Activated CD4-positive, alpha-beta memory T cell treated with anti-CD3 and anti-CD28 coated beads for 36 hours (primary cell): ENCODE measurements at regions of chr14 and their contacts with region 1.

Region 1: GRCh38 chr14:63470962-63471793 is 72.0 kb downstream of the PPP2R5E start:
- DNase-seq: no peak
- H3K4me3 Mint-ChIP-seq: no peak overlapping the region
- H3K27ac Mint-ChIP-seq: no peak overlapping the region
- H3K4me1 Mint-ChIP-seq: peaks cover 49% of the 10 kb centered on the region
- H3K27me3 Mint-ChIP-seq: no peaks in the 10 kb centered on the region

Region 2: GRCh38 chr14:63437953-63438757 is 33.0 kb before region 1 on chr14:
- CTCF ChIA-PET with region 1: interaction called, 4 read pairs
- POLR2A ChIA-PET with region 1: interaction called, 3 read pairs
- intact Hi-C with region 1: loop called (anchors 5 kb)
- DNase-seq: peak; percentile 22
- H3K4me3 Mint-ChIP-seq: no peak overlapping the region
- H3K27ac Mint-ChIP-seq: no peak overlapping the region
- H3K4me1 Mint-ChIP-seq: peaks cover 51% of the 10 kb centered on the region
- H3K27me3 Mint-ChIP-seq: no peaks in the 10 kb centered on the region

Region 3: DNA sequence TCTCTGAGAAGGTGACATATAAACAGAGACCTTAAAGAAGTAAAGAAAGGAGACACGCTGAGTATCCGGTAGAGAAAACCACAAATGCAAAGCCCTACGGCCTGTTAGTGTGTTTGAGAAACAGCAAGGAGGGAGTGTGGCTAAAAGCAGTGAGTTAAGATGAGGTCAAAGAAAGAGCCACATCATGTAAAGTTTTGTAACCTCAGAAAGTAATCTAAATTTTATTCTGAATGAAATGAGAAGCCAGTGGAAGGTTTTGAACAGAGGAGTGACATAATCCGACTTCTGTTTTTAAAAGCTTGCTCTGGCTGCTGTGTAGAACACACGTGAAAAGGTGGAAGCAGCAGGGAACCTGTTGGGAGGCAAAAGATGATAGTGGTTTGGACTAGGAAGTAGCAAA is 39.4 kb after region 1 on chr14:
- CTCF ChIA-PET with region 1: no interaction called
- POLR2A ChIA-PET with region 1: no interaction called
- intact Hi-C with region 1: loop called (anchors 1 kb)
- DNase-seq: peak; percentile 21
- H3K4me3 Mint-ChIP-seq: no peak overlapping the region
- H3K27ac Mint-ChIP-seq: no peak overlapping the region
- H3K4me1 Mint-ChIP-seq: peaks cover 57% of the 10 kb centered on the region
- H3K27me3 Mint-ChIP-seq: no peaks in the 10 kb centered on the region

Region 4: DNA sequence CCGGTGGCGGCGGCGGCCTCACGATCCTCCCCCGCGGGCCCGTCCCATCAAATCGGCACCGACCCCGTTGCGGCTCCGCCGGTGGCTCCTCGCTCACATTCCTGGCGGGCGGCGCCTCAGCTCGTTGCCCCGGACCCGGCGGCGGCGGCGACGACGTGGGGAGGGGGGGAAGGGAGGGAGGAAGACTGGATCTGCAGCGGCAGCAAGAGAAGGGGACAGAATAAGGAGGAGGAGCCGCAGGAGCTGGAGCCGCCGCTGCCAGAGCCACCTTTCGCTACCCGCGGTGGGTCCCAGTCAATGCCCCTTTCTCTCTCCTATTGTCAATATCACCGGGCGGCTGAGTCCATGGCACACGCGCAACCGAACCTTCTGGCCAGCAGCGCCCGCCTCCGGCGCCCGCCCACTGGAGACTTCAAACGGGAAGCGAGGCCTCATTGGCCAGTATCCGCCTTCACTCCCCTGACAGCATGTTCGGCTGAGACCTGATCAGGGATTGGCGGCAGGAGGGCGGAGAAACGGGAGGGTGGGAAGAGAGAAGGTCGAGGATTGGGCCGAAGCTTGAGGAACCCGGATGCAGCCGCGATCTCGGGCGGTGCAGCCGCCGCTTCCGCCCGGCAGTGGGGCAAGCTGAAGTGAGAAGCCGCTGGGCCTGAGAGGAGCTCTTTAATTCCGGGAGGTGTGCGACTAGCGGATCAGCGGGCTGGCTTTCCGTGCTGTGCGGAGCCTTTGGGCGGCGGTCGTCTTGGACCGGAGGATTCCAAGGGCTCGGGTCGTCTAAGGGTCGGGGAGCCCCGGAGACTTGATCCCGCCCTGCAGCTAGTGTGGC is 72.0 kb after region 1 on chr14 and contains the start of gene PPP2R5E:
- CTCF ChIA-PET with region 1: no interaction called
- POLR2A ChIA-PET with region 1: no interaction called
- intact Hi-C with region 1: loop called (anchors 1 kb)
- DNase-seq: peak; percentile 99
- H3K4me3 Mint-ChIP-seq: peak within 1 kb of the TSS; percentile 82
- H3K27ac Mint-ChIP-seq: peak within 1 kb of the TSS; percentile 86
- H3K4me1 Mint-ChIP-seq: peaks cover 31% of the 10 kb centered on the region
- H3K27me3 Mint-ChIP-seq: no peaks in the 10 kb centered on the region
- total RNA-seq, gene PPP2R5E: 37.7 to 37.8 TPM